Tibial artery (tissue), 4 donors: ENCODE measurements at regions of chr20 and their contacts with region 1.

Region 1: GRCh38 chr20:41249406-41250281 is 67.9 kb downstream of the ZHX3 start:
- DNase-seq: peak; percentile 83 to 92
- H3K4me3 ChIP-seq: peak overlapping the region in 1 of 2 donors; percentile 1
- H3K27ac ChIP-seq: peak overlapping the region; percentile 86 to 90
- H3K4me1 ChIP-seq: peaks cover 10 to 91% (median 61%) of the 10 kb centered on the region in 4 donors
- H3K27me3 ChIP-seq: no peaks in the 10 kb centered on the region
- CTCF ChIP-seq: peak; percentile 19 to 35

Region 2: GRCh38 chr20:40892649-40893048 is 357.0 kb before region 1 on chr20:
- intact Hi-C with region 1: no loop called
- DNase-seq: peak in 1 of 2 donors; percentile 7
- H3K4me3 ChIP-seq: no peak overlapping the region
- H3K27ac ChIP-seq: no peak overlapping the region
- H3K4me1 ChIP-seq: no peaks in the 10 kb centered on the region
- H3K27me3 ChIP-seq: peaks cover 0 to 3% of the 10 kb centered on the region in 2 donors
- CTCF ChIP-seq: no peak

Region 3: DNA sequence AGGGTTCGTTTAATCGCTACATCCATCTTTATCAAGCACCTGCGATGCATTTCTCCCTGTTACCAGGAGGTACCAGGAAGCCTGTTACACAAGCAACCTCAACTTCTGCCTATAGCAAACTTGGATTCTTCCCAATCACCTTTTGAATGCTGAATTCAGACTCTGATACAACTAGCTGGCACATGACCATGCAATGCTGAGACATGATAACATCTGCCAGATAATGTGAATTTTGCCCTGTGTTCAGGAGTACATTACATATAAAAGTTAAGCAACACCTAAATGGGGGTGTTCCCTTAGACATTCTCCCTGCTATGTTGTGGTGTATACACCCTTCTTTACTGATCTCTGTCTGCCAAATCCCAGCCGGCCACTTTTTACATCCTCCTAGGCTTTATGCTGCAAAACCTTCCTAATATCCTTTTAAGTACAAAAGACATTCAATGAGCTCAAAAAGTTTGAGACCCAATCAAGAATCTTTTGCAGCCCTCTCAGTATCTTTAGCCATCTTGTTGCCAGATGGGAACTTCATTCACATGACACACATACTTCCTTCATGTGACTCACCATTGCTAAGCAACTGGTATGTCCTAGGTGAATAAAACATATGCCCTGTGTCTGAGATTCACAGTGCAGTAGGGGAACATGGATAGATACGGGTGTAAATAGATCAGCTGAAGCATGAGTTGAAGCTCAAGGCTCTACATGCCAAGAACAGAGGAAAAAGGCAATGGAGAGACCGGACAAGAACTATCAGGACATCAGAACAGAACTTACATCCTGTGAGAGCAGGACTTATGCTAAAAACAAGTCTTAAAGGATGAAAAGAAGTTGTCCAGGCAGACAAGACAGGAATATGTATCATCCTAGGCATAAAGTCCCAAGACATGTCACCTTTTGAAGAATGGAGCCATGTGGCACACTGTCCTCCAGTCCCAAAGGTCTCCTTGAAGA is 16.4 kb before region 1 on chr20:
- intact Hi-C with region 1: loop called (anchors 2 kb)
- DNase-seq: no peak
- H3K4me3 ChIP-seq: no peak overlapping the region
- H3K27ac ChIP-seq: peak overlapping the region; percentile 65 to 83
- H3K4me1 ChIP-seq: peaks cover 0 to 64% (median 39%) of the 10 kb centered on the region in 4 donors
- H3K27me3 ChIP-seq: no peaks in the 10 kb centered on the region
- CTCF ChIP-seq: no peak

Region 4: DNA sequence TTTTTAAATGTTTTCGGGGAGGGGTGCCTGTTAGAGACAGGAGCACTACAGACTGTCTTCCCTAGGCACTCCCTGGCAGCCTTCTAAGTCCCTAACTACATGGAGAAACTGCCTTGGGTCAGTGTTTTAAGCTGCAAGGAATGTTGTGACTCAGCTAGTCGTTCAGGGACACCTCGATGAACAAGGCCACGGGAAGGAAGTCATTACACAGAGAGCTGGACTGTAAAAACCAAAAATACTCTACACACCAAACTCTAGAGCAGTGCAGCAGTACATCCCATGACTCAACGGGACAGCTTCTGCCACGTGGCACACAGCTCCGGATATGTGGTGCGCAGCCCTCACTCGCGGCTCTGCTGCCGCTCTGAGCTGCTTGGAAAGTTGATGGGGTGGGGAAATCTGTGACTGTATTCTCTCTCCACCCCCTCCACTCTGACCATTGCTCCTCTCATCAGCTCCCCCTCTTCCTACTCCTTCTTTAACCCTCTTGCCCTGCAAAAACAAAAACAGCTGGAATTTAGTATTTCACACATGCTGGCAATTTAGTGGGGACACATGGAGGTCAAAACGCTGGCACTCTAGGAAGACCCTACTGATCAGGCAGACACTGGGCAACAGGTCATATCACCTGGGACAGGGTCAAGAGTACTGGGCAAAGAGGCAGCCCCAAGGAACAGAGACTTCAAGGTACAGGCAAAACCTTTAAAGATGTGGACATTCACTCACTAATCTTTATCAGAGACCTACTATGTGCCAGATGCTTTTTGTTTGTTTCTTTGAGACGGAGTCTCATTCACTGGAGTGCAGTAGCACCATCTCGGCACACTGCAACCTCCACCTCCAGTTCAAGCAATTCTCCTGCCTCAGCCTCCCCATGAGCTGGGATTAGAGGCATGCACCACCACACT is 80.0 kb after region 1 on chr20:
- intact Hi-C with region 1: loop called (anchors 5 kb)
- DNase-seq: peak; percentile 92 to 94
- H3K4me3 ChIP-seq: no peak overlapping the region
- H3K27ac ChIP-seq: peak overlapping the region; percentile 73 to 77
- H3K4me1 ChIP-seq: peaks cover 0 to 21% (median 16%) of the 10 kb centered on the region in 4 donors
- H3K27me3 ChIP-seq: no peaks in the 10 kb centered on the region
- CTCF ChIP-seq: no peak